ENCODE measurements at regions of chr19 and their contacts with region 1.

Region 1: DNA sequence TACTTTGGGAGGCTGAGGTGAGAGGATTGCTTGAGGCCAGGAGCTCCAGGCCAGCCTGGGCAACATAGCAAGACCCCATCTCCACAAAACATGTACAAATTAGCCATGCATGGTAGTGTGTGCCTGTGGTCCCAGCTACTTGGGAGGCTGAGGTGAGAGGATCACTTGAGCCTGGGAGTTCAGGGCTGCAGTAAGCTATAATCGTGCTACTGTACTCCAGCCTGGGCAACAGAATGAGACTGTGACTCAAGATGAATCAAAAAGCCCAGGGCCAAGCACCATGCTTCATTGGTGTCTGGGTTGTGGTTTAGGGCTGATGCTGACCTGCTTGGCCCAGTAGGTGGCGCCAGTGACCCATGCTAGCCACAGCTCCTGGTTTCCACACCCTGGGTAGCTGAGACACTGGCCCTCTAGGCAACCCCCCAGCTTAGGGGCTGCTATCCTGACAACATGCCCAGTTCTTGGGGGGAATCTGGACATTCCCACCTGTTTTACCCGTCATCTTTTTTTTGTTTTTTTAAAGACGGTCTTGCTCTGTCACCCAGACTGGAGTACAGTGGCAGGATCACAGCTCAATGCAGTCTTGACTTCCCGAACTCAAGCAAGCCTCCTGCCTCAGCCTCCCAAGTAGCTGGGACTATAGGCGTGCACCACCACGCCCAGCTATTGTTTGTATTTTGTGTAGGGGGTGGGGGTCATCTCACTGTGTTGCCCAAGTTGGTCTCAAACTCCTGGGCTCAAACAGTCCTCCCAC is 5.5 kb downstream of the CCDC124 start:
- DNase-seq: peak; percentile 83
- ATAC-seq: peak; percentile 84

Region 2: GRCh38 chr19:17996826-17997316 is 58.6 kb after region 1 on chr19:
- intact Hi-C with region 1: loop called (anchors 1 kb)
- DNase-seq: peak; percentile 91
- ATAC-seq: peak; percentile 85

Region 3: GRCh38 chr19:18131841-18132596 is 193.8 kb after region 1 on chr19:
- intact Hi-C with region 1: no loop called
- DNase-seq: no peak
- ATAC-seq: no peak